CD4-positive, alpha-beta T cell (primary cell): ENCODE measurements at regions of chr7 and their contacts with region 1.

Region 1: DNA sequence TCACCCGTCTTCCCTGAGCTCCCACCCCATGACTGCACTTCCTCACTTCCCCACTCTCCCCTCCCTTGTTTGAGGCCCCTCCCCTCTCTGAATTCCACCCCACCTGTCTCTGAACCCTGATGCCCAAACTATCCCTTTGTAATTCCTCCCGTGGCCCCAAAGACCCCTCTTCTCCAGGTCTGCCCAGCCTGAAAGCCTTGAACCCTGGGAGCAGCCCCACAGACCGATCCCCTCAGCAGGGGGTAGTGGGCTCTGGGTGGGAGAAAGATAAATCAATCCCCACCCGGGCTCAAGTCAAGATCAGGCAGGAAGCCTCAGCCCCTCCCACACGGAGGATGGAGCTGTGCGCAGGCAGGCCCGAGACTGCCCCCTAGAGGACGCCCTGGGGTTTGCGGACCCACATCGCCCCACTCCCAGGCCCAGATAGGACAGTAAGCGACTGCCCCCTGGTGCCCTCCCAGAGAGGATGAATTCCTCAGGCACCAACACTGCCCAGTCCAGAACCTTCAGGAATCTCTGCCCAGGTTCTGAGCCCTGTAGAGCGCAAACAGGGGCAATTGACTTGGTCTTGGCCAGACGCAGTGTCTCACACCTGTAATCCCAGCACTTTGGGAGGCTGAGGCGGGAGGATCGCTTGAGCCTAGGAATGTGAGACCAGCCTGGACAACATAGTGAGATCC is 11.7 kb downstream of the HSPB1 start:
- DNase-seq: peak; percentile 92 to 99 (median 96)
- ATAC-seq: peak; percentile 68
- H3K4me3 ChIP-seq: no peak overlapping the region
- H3K4me3 Mint-ChIP-seq: peak overlapping the region; percentile 26
- H3K27ac ChIP-seq: no peak overlapping the region
- H3K27ac Mint-ChIP-seq: peak overlapping the region; percentile 5
- H3K4me1 ChIP-seq: peaks cover 22% of the 10 kb centered on the region
- H3K4me1 Mint-ChIP-seq: peaks cover 27% of the 10 kb centered on the region
- H3K27me3 ChIP-seq: no peaks in the 10 kb centered on the region
- H3K27me3 Mint-ChIP-seq: no peaks in the 10 kb centered on the region
- CTCF ChIP-seq: peak; percentile 99

Region 2: GRCh38 chr7:76166404-76167255 is 147.6 kb before region 1 on chr7:
- CTCF ChIA-PET with region 1: interaction called, 4 read pairs
- POLR2A ChIA-PET with region 1: interaction called, 15 read pairs
- intact Hi-C with region 1: no loop called
- DNase-seq: peak; percentile 81 to 96 (median 90)
- ATAC-seq: peak; percentile 88
- H3K4me3 ChIP-seq: peak overlapping the region; percentile 92
- H3K4me3 Mint-ChIP-seq: peak overlapping the region; percentile 93
- H3K27ac ChIP-seq: peak overlapping the region; percentile 75 to 87
- H3K27ac Mint-ChIP-seq: peak overlapping the region; percentile 99
- H3K4me1 ChIP-seq: peaks cover 16% of the 10 kb centered on the region
- H3K4me1 Mint-ChIP-seq: peaks cover 12% of the 10 kb centered on the region
- H3K27me3 ChIP-seq: no peaks in the 10 kb centered on the region
- H3K27me3 Mint-ChIP-seq: no peaks in the 10 kb centered on the region
- CTCF ChIP-seq: no peak

Region 3: DNA sequence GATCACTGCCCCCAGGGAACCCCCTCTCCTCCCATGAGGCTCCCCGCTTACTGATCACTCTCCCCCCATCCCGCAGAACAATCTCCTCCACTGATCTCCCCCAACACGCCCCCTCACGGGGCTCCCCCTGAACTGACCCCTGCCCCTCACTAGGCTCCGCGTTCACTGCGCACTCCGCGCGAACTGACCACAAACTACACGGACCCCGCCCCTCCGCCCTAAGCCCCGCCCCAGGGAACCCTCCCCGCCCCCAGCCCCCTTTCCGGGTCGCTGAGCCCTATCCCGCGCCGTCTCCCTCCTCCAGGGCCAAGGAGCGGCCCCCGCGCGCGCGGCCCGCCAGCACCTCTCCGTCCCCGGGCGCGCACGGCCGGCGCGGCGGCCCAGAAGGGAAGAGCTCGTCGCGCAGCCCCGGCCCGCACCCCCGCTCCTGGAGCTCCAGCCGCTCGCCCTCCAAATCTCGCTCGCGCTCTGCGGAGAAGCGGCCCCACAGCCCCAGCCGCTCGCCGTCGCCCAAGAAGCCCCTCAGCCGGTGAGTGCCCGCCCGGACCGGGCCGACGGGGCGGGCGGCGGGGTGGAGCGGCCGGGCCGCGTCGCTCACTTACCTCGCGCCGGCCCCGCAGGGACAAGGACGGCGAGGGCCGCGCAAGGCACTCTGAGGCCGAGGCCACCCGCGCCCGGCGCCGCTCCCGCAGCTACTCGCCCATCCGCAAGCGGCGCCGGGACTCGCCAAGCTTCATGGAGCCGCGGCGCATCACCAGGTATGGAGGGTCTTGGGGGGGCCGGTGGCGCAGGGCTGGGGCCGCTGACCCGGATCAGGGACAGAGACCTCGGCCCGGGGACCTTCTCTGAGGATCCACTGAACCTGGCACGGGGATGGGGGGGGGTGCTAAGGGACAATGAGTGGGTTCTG is 31.6 kb before region 1 on chr7:
- CTCF ChIA-PET with region 1: interaction called, 4 read pairs
- POLR2A ChIA-PET with region 1: interaction called, 9 read pairs
- intact Hi-C with region 1: loop called in 1 of 2 experiments (anchors 5 kb)
- DNase-seq: peak in 2 of 14 experiments; percentile 34 to 41
- ATAC-seq: peak; percentile 59
- H3K4me3 ChIP-seq: peak overlapping the region; percentile 28
- H3K4me3 Mint-ChIP-seq: peak overlapping the region; percentile 66
- H3K27ac ChIP-seq: no peak overlapping the region
- H3K27ac Mint-ChIP-seq: no peak overlapping the region
- H3K4me1 ChIP-seq: peaks cover 16% of the 10 kb centered on the region
- H3K4me1 Mint-ChIP-seq: no peaks in the 10 kb centered on the region
- H3K27me3 ChIP-seq: peaks cover 26 to 29% of the 10 kb centered on the region in 2 experiments
- H3K27me3 Mint-ChIP-seq: peaks cover 43% of the 10 kb centered on the region
- CTCF ChIP-seq: no peak

Region 4: DNA sequence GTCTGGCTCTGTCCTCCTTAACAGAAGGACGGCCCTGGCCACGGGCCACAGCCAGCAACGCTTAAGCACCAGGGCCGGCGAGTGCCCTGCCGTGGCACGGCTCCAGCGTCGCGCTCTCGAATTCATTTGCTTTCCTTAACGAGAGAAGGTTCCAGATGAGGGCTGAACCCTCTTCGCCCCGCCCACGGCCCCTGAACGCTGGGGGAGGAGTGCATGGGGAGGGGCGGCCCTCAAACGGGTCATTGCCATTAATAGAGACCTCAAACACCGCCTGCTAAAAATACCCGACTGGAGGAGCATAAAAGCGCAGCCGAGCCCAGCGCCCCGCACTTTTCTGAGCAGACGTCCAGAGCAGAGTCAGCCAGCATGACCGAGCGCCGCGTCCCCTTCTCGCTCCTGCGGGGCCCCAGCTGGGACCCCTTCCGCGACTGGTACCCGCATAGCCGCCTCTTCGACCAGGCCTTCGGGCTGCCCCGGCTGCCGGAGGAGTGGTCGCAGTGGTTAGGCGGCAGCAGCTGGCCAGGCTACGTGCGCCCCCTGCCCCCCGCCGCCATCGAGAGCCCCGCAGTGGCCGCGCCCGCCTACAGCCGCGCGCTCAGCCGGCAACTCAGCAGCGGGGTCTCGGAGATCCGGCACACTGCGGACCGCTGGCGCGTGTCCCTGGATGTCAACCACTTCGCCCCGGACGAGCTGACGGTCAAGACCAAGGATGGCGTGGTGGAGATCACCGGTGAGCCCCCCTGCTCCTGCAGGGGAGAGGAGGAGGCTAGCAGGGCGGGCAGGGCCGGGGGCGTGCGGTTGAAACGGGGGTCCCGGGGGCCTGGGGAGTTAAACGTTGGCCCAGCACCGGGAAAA is 11.6 kb before region 1 on chr7 and contains the start of gene HSPB1:
- CTCF ChIA-PET with region 1: interaction called, 20 read pairs
- POLR2A ChIA-PET with region 1: interaction called, 27 read pairs
- intact Hi-C with region 1: no loop called
- DNase-seq: peak; percentile 41 to 86 (median 64)
- ATAC-seq: peak; percentile 73
- H3K4me3 ChIP-seq: peak within 1 kb of the TSS; percentile 80
- H3K4me3 Mint-ChIP-seq: peak within 1 kb of the TSS; percentile 96
- H3K27ac ChIP-seq: peak within 1 kb of the TSS; percentile 29 to 46
- H3K27ac Mint-ChIP-seq: peak within 1 kb of the TSS; percentile 57
- H3K4me1 ChIP-seq: peaks cover 24% of the 10 kb centered on the region
- H3K4me1 Mint-ChIP-seq: peaks cover 21% of the 10 kb centered on the region
- H3K27me3 ChIP-seq: no peaks in the 10 kb centered on the region
- H3K27me3 Mint-ChIP-seq: no peaks in the 10 kb centered on the region
- CTCF ChIP-seq: no peak
- total RNA-seq, gene HSPB1: 38.0 to 38.6 TPM

Region 5: GRCh38 chr7:76352193-76352592 is 38.0 kb after region 1 on chr7:
- CTCF ChIA-PET with region 1: interaction called, 7 read pairs
- POLR2A ChIA-PET with region 1: interaction called, 64 read pairs
- intact Hi-C with region 1: no loop called
- DNase-seq: no peak
- ATAC-seq: no peak
- H3K4me3 ChIP-seq: no peak overlapping the region
- H3K4me3 Mint-ChIP-seq: no peak overlapping the region
- H3K27ac ChIP-seq: no peak overlapping the region
- H3K27ac Mint-ChIP-seq: no peak overlapping the region
- H3K4me1 ChIP-seq: peaks cover 49% of the 10 kb centered on the region
- H3K4me1 Mint-ChIP-seq: peaks cover 72% of the 10 kb centered on the region
- H3K27me3 ChIP-seq: no peaks in the 10 kb centered on the region
- H3K27me3 Mint-ChIP-seq: no peaks in the 10 kb centered on the region
- CTCF ChIP-seq: no peak

Region 6: DNA sequence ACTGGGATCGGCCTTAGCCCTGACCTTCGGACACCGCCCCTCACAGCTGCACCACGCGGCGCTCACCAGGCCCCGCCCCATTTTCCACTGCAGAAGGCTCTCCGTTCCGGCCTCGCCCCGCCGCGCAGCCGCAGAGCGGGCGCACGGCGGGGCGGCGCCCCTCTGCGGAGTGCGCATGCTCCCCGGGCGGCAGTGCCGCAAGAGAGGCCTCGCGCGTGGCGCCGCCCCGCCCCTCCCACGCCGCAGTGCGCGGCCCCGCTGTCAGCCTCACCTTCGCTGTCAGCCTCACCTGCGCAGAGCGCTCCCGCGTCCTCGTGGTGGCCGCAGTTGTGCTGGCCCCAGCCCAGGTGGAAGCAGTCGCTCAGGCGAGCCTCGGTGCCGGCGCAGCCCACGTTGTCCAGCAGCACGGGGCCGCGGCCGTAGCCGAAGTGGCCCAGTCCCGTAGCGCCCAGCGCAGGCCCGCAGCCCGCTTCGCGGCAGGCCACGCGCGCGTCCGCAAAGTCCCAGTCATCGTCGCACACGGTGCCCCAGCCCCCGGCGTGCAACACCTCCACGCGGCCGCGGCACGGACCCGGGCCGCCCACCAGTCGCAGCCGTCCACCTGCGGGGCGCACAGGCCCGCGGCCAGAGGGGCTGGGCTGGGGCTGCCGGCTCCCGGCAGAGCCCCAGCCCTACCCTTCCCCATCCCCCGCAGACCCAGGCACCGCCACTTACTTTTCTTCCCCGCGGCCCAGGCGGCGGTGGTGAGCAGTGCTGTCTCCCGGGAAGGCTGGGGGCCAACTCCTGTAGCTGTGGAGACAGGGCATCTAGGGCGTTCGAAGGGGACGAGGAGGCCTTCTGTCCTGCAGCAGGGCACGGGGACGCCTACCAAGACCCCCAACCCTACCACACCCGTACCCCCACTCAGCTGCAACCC is 79.2 kb after region 1 on chr7:
- CTCF ChIA-PET with region 1: interaction called, 3 read pairs
- POLR2A ChIA-PET with region 1: interaction called, 10 read pairs
- intact Hi-C with region 1: no loop called
- DNase-seq: peak; percentile 81 to 97 (median 90)
- ATAC-seq: peak; percentile 81
- H3K4me3 ChIP-seq: peak overlapping the region; percentile 60
- H3K4me3 Mint-ChIP-seq: peak overlapping the region; percentile 88
- H3K27ac ChIP-seq: peak overlapping the region; percentile 42 to 46
- H3K27ac Mint-ChIP-seq: peak overlapping the region; percentile 88
- H3K4me1 ChIP-seq: peaks cover 33% of the 10 kb centered on the region
- H3K4me1 Mint-ChIP-seq: peaks cover 22% of the 10 kb centered on the region
- H3K27me3 ChIP-seq: no peaks in the 10 kb centered on the region
- H3K27me3 Mint-ChIP-seq: no peaks in the 10 kb centered on the region
- CTCF ChIP-seq: no peak